GM12878 (cell line): ENCODE measurements at regions of chr21 and their contacts with region 1.

Region 1: GRCh38 chr21:32770871-32771523 is 558 bp downstream of the PAXBP1 start:
- DNase-seq: no peak
- ATAC-seq: peak; percentile 65
- H3K4me3 ChIP-seq: peak overlapping the region; percentile 90
- H3K27ac ChIP-seq: peak overlapping the region; percentile 87
- H3K4me1 ChIP-seq: peaks cover 9% of the 10 kb centered on the region; the same call in 1 of the 2 replicates
- H3K27me3 ChIP-seq: no peaks in the 10 kb centered on the region
- CTCF ChIP-seq: no peak
- EP300 ChIP-seq: no peak
- POLR2A ChIP-seq: 0 out of 2 replicates have a peak, but pooled peaks have one; percentile 8
- RAD21 ChIP-seq: no peak

Region 2: DNA sequence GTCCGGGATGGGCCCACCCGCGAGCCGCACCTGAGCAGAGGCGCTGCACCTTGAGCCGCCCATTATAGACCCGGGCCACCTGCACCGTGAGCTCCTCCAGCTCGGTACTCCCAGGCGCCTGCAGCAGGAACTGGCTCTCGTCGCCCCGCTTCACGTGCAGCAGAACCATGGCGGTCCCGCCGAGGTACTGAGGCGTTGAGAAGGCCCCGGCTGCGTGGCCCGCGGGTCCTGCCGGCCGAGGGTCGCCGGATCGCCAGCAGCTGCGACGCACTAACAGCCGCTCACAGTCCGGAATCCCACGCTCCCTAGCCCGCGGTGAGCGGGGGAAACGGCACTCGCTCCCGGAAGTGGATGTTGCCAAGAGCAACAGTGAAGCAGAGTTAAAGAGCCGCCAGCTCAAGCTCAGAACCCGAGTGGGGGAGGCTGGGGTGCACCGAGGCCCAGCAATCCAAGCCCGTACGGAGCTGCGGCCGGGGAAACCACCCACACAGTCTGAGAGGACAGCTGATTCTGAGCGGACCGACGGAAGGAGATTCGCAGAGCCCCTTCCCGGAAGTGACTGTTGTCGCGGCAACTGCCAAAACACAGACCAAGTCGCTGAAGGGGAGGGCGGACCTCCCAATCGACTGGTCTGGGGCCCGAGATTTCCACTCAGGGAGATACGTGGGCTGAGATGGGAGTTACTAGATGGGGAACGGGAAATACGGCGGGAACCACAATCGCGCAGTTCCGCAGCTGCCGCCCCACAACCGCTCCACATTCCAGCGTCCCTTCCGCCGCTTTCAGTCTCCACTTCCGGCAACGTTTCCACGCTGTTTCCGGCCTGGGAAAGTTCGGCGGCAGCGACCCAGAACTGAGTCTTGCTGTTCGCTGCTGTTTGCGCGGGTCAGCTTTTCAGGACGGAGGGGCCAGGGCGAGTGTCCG is 158.7 kb before region 1 on chr21 and contains the start of gene CFAP298:
- CTCF ChIA-PET with region 1: interaction called, 5 read pairs
- POLR2A ChIA-PET with region 1: no interaction called
- RAD21 ChIA-PET with region 1: interaction called, 4 read pairs
- SMC1A ChIA-PET with region 1: no interaction called
- in situ Hi-C with region 1: no loop called
- intact Hi-C with region 1: loop called (anchors 2 kb)
- DNase-seq: peak; percentile 67
- ATAC-seq: peak; percentile 96
- H3K4me3 ChIP-seq: peak within 1 kb of the TSS; percentile 90
- H3K27ac ChIP-seq: peak within 1 kb of the TSS; percentile 39
- H3K4me1 ChIP-seq: no peaks in the 10 kb centered on the region
- H3K27me3 ChIP-seq: no peaks in the 10 kb centered on the region
- CTCF ChIP-seq: no peak
- EP300 ChIP-seq: peak in 1 of 2 experiments; percentile 11; a peak in 1 of 4 replicates
- POLR2A ChIP-seq: peak; percentile 57
- RAD21 ChIP-seq: no peak
- polyA plus RNA-seq, gene CFAP298: 9.5 to 19.5 TPM

Region 3: DNA sequence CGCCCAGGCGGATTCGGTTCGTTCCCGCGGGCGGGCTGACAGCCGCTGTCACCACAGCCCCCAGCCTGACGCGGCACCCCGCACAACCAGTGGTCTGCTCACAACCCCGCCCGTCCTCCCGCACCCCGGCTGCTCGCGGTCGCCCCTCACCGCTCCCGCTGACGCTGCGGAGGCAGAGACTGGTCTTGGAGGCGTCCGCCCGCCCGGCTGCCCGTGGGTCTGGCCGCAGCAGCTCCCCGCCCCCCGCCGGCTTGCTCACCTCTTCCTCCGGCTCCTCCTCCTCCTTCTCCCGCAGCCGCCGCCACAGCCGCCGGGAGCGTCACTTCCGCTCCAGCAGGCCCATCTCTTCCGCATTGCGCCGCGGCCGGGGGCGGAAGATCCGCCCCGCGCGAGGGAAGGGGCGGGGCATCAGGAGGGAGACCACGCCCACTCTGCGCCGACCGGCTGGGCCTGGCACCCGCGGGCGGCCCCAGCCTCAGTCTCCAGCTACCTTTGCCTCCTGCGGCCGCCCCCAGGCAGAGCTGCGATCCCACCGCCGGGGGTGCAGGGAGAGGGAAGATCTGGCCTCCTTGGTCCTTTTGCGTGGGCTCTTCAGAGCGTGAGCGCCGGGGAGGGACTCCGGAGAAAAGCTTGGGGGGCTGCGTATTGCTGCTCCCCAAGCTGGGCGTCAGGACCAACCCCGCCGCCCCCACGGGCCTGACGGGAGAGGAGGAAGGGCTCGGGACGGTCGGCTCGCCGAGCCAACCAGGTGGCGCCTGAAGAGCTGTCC is 43.1 kb before region 1 on chr21 and contains the start of gene SYNJ1:
- CTCF ChIA-PET with region 1: interaction called, 3 read pairs
- POLR2A ChIA-PET with region 1: interaction called, 18 read pairs
- RAD21 ChIA-PET with region 1: interaction called, 7 read pairs
- SMC1A ChIA-PET with region 1: interaction called, 5 read pairs
- in situ Hi-C with region 1: no loop called
- intact Hi-C with region 1: no loop called
- DNase-seq: peak; percentile 71
- ATAC-seq: peak; percentile 95
- H3K4me3 ChIP-seq: peak within 1 kb of the TSS; percentile 99
- H3K27ac ChIP-seq: peak within 1 kb of the TSS; percentile 74
- H3K4me1 ChIP-seq: no peaks in the 10 kb centered on the region
- H3K27me3 ChIP-seq: no peaks in the 10 kb centered on the region
- CTCF ChIP-seq: no peak
- EP300 ChIP-seq: peak in 1 of 2 experiments; percentile 17; a peak in 1 of 4 replicates
- POLR2A ChIP-seq: peak; percentile 91
- RAD21 ChIP-seq: no peak
- polyA plus RNA-seq, gene SYNJ1: 1.2 to 1.4 TPM

Region 4: GRCh38 chr21:32741336-32741972 is 29.5 kb before region 1 on chr21:
- CTCF ChIA-PET with region 1: no interaction called
- POLR2A ChIA-PET with region 1: no interaction called
- RAD21 ChIA-PET with region 1: no interaction called
- SMC1A ChIA-PET with region 1: no interaction called
- in situ Hi-C with region 1: no loop called
- intact Hi-C with region 1: no loop called
- DNase-seq: no peak
- ATAC-seq: no peak
- H3K4me3 ChIP-seq: no peak overlapping the region
- H3K27ac ChIP-seq: no peak overlapping the region
- H3K4me1 ChIP-seq: no peaks in the 10 kb centered on the region
- H3K27me3 ChIP-seq: no peaks in the 10 kb centered on the region
- CTCF ChIP-seq: no peak
- EP300 ChIP-seq: no peak
- POLR2A ChIP-seq: no peak
- RAD21 ChIP-seq: no peak